ENCODE measurements at regions of chr17 and their contacts with region 1.

Region 1: DNA sequence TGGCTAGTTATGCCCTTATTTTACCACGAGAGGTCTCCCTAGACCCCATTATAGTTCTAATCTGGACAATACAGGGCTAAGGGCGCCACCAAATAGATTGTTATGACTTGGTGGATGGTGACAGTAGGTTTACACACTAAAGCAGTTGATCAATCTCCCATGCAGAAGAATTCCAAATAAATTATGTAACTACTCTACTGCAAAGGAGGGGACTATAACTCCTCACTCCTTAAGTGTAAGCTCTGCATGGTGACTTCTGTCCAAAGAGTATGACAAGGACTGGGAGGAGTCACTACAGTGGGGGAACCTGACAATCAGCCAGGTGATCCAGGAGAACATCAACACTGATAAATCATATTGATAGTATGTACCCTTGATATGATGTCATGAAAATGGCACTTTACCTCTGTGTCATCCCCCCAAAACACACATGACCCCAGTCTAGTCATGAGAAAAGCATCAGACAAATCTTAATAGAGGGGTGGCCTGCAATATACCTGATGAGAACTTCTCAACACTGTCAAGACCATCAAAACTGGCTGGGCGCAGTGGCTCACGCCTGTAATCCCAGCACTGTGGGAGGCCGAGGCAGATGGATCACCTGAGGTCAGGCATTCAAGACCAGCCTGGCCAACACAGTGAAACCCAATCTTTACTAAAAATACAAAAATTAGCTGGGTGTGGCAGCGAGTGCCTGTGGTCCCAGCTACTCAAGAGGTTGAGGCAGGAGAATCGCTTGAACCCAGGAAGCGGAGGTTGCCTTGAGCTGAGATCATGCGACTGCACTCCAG is 20.1 kb upstream of the YPEL2 start:
- DNase-seq: peak in 2 of 5 donors; percentile 24 to 30
- ATAC-seq: peak; percentile 83 to 96 (median 95)
- H3K4me3 ChIP-seq: no peak overlapping the region
- H3K27ac ChIP-seq: no peak overlapping the region
- H3K4me1 ChIP-seq: peaks cover 0 to 9% (median 0%) of the 10 kb centered on the region in 12 donors
- H3K27me3 ChIP-seq: no peaks in the 10 kb centered on the region
- CTCF ChIP-seq: peak; percentile 69 to 94 (median 86)
- POLR2A ChIP-seq: no peak

Region 2: DNA sequence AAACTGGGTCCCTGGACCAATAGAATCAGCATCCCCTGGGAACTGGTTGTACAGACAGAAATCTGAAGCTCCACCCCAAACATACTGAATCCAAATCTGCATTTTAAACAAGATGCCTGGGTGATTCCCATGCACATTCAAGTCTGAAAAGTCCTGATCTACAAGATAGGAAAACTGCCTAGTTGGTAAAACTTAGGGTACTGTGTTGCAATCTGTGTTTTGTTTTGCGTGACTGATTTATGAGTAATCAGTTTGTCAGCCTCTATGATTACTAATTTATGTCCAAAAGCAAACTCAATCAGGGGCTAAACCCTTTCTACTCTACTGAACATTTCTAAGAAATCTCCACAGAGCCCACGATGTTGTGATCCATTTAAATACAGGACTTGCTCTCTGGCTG is 123.9 kb after region 1 on chr17:
- intact Hi-C with region 1: loop called in 7 of 10 experiments (anchors 1 to 5 kb)
- DNase-seq: no peak
- ATAC-seq: peak in 1 of 4 donors; percentile 15
- H3K4me3 ChIP-seq: no peak overlapping the region
- H3K27ac ChIP-seq: peak overlapping the region in 1 of 12 donors; percentile 17
- H3K4me1 ChIP-seq: peaks cover 0 to 72% (median 23%) of the 10 kb centered on the region in 12 donors
- H3K27me3 ChIP-seq: no peaks in the 10 kb centered on the region
- CTCF ChIP-seq: no peak
- POLR2A ChIP-seq: no peak

Region 3: DNA sequence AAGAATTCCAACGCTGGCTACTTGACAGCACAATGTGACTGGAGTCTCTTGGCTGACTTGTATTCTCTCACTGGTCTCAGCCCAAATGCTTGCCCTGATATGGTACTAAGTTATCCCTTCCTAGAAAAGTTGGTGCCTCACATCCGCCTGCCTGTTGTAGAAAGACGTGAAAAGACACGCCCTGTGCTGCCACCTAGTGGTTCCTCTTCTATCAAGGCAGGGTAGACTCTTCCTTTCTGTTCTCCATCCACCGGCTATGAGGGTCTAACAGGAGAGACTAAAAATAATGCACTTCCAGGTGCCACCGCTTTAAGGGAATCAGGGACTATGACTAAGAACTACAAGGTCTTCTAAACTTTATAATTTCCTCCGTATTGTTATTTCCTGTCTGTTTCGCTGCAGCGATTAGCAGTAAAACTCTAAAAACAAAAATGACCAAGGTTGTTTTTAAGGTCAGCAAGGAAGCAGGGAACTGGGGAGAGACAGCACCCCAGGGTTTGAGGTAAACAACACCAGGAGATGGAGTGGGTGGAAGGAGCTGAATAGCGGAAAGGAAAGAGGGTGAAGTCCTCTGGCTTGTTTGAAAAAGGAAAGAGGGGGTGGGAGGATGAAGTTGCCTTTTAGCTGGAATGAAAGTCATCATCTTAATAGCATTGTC is 129.6 kb after region 1 on chr17:
- intact Hi-C with region 1: loop called in 9 of 10 experiments (anchors 1 to 5 kb)
- DNase-seq: peak; percentile 79 to 95 (median 91)
- ATAC-seq: peak; percentile 86 to 96 (median 92)
- H3K4me3 ChIP-seq: peak overlapping the region in 4 of 12 donors; percentile 6 to 31 (median 17)
- H3K27ac ChIP-seq: peak overlapping the region; percentile 25 to 89 (median 73)
- H3K4me1 ChIP-seq: peaks cover 0 to 57% (median 30%) of the 10 kb centered on the region in 12 donors
- H3K27me3 ChIP-seq: no peaks in the 10 kb centered on the region
- CTCF ChIP-seq: peak; percentile 77 to 95 (median 87)
- POLR2A ChIP-seq: no peak

Region 4: DNA sequence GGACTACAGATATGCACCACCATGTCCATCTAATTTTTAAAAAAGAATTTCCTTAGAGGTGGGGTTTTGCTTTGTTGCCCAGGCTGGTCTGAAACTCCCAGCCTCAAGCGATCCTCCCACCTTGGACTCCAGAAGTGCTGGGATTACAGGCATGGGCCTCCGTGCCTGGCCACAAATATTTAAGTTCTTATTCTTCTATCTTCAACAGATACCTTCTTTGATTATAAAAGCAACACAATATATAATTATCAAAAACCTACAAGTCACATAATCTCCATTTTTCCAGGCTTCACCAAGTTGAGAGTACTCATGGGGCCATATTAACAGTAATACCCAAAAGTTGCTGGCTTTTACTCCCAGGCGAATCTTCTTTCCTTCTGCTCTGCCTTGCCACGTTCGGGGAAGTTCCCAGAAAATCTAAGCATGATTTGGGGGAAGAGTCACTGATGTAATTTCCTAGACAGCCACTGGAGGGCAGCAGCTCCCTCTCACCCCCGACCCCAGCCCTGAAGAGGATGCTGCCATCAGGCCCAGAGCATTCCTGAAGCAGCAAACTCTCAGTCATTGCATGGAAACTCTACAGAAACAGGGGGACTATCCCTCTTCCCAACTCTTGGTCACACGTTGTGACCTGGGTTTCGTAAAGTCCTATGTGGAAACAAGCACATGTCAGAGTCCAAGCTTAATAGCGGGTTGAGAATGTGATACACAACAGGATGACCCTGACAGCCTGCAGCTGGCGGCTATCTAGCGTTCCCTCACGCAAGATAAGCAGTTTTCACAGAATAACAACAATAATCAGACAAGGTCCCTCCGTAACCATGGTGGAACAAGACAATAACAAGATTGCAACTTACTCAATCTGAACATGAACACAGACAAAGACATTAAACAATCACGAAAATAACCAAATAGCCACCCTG is 210.1 kb after region 1 on chr17:
- intact Hi-C with region 1: loop called in 5 of 10 experiments (anchors 5 to 10 kb)
- DNase-seq: peak in 4 of 5 donors; percentile 34 to 46 (median 40)
- ATAC-seq: peak in 3 of 4 donors; percentile 61 to 80 (median 72)
- H3K4me3 ChIP-seq: no peak overlapping the region
- H3K27ac ChIP-seq: no peak overlapping the region
- H3K4me1 ChIP-seq: peaks cover 0 to 19% (median 0%) of the 10 kb centered on the region in 12 donors
- H3K27me3 ChIP-seq: no peaks in the 10 kb centered on the region
- CTCF ChIP-seq: peak; percentile 75 to 89 (median 86)
- POLR2A ChIP-seq: no peak

Region 5: DNA sequence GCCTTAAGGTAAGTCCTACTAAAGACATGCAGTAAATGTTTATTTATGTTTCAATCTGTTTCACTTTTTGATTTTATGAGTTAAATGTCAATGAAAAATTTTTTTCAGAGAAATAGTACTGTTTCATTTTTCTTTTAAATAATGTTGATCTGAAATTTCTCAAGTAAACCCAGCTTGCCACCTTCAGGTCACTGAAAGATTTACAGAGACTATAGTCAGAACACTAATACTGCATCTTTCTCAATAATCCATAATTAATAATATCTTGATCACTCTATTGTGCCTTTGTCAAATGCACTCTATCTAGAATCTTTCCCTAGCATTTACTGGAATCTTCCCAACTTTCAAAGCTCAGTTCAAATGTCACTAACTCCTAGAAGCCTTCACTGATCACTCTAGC is 247.7 kb after region 1 on chr17:
- intact Hi-C with region 1: loop called in 3 of 10 experiments (anchors 5 to 10 kb)
- DNase-seq: no peak
- ATAC-seq: no peak
- H3K4me3 ChIP-seq: no peak overlapping the region
- H3K27ac ChIP-seq: no peak overlapping the region
- H3K4me1 ChIP-seq: no peaks in the 10 kb centered on the region
- H3K27me3 ChIP-seq: no peaks in the 10 kb centered on the region
- CTCF ChIP-seq: peak in 7 of 12 donors; percentile 5 to 39 (median 33)
- POLR2A ChIP-seq: no peak

Region 6: GRCh38 chr17:59565171-59565969 is 254.0 kb after region 1 on chr17 and contains the start of gene DHX40:
- intact Hi-C with region 1: loop called in 2 of 10 experiments (anchors 5 kb)
- DNase-seq: peak; percentile 94 to 96 (median 95)
- ATAC-seq: peak; percentile 97 to 99 (median 99)
- H3K4me3 ChIP-seq: peak within 1 kb of the TSS; percentile 57 to 98 (median 87)
- H3K27ac ChIP-seq: peak within 1 kb of the TSS; percentile 51 to 87 (median 80)
- H3K4me1 ChIP-seq: peaks cover 0 to 16% (median 9%) of the 10 kb centered on the region in 12 donors
- H3K27me3 ChIP-seq: no peaks in the 10 kb centered on the region
- CTCF ChIP-seq: peak in 1 of 12 donors; percentile 5
- POLR2A ChIP-seq: peak in 1 of 2 donors; percentile 41
- total RNA-seq, gene DHX40: 15.5 to 25.4 (median 21.2) TPM

Measured in heart left ventricle (tissue), 16 donors.